Natural killer cell (primary cell): ENCODE measurements at regions of chr7 and their contacts with region 1.

Region 1: GRCh38 chr7:143240291-143241168 is 18.7 kb downstream of the TAS2R40 start:
- DNase-seq: peak; percentile 37 to 88
- ATAC-seq: peak; percentile 93 to 99 (median 97)
- H3K4me3 ChIP-seq: no peak overlapping the region
- H3K4me3 Mint-ChIP-seq: no peak overlapping the region
- H3K27ac ChIP-seq: no peak overlapping the region
- H3K27ac Mint-ChIP-seq: no peak overlapping the region
- H3K4me1 ChIP-seq: peaks cover 3% of the 10 kb centered on the region
- H3K4me1 Mint-ChIP-seq: peaks cover 0 to 3% of the 10 kb centered on the region in 2 donors
- H3K27me3 ChIP-seq: no peaks in the 10 kb centered on the region
- H3K27me3 Mint-ChIP-seq: peaks cover 16 to 36% of the 10 kb centered on the region in 2 donors
- CTCF ChIP-seq: peak; percentile 97

Region 2: GRCh38 chr7:142459551-142459963 is 781.0 kb before region 1 on chr7:
- intact Hi-C with region 1: no loop called
- DNase-seq: peak in 1 of 2 donors; percentile 73
- ATAC-seq: peak; percentile 53 to 75 (median 69)
- H3K4me3 ChIP-seq: no peak overlapping the region
- H3K4me3 Mint-ChIP-seq: no peak overlapping the region
- H3K27ac ChIP-seq: no peak overlapping the region
- H3K27ac Mint-ChIP-seq: no peak overlapping the region
- H3K4me1 ChIP-seq: peaks cover 9% of the 10 kb centered on the region
- H3K4me1 Mint-ChIP-seq: peaks cover 0 to 6% of the 10 kb centered on the region in 2 donors
- H3K27me3 ChIP-seq: no peaks in the 10 kb centered on the region
- H3K27me3 Mint-ChIP-seq: peaks cover 4 to 10% of the 10 kb centered on the region in 2 donors
- CTCF ChIP-seq: peak; percentile 73

Region 3: GRCh38 chr7:143305423-143306070 is 65.0 kb after region 1 on chr7:
- intact Hi-C with region 1: loop called (anchors 2 kb)
- DNase-seq: peak; percentile 39 to 78
- ATAC-seq: peak; percentile 58 to 69 (median 66)
- H3K4me3 ChIP-seq: no peak overlapping the region
- H3K4me3 Mint-ChIP-seq: no peak overlapping the region
- H3K27ac ChIP-seq: no peak overlapping the region
- H3K27ac Mint-ChIP-seq: peak overlapping the region in 1 of 2 donors; percentile 2
- H3K4me1 ChIP-seq: peaks cover 6% of the 10 kb centered on the region
- H3K4me1 Mint-ChIP-seq: peaks cover 16 to 26% of the 10 kb centered on the region in 2 donors
- H3K27me3 ChIP-seq: no peaks in the 10 kb centered on the region
- H3K27me3 Mint-ChIP-seq: no peaks in the 10 kb centered on the region
- CTCF ChIP-seq: peak; percentile 46

Region 4: DNA sequence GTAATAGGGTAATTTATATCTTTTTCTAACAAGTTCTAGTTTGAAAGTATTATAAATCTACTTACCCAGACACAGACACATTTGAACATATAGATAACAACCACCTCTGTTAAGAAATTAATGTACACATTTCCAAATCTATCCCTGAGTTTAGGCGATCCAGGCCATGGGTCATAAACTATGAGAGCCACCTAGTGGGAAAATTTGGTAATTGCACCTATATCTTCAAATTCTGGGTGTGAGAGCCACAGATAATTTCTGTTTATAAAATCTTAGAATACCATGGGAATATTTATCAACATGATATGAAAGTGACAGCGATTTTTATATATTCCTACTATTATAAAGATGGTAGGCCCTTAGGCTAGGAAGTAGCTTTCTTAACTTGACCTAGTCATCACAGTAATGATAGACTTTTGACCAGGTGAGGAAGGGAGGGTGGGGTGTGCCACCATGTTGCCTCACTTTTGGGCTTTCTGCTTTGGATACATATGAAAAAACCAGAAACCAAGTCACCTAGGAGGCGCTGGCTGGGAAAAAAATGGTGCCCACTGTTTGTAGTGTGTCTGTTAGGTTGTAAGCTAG is 176.1 kb after region 1 on chr7:
- intact Hi-C with region 1: loop called (anchors 1 kb)
- DNase-seq: peak in 1 of 2 donors; percentile 78
- ATAC-seq: peak; percentile 57 to 65 (median 65)
- H3K4me3 ChIP-seq: no peak overlapping the region
- H3K4me3 Mint-ChIP-seq: no peak overlapping the region
- H3K27ac ChIP-seq: no peak overlapping the region
- H3K27ac Mint-ChIP-seq: no peak overlapping the region
- H3K4me1 ChIP-seq: no peaks in the 10 kb centered on the region
- H3K4me1 Mint-ChIP-seq: peaks cover 0 to 6% of the 10 kb centered on the region in 2 donors
- H3K27me3 ChIP-seq: peaks cover 5% of the 10 kb centered on the region
- H3K27me3 Mint-ChIP-seq: peaks cover 38 to 41% of the 10 kb centered on the region in 2 donors
- CTCF ChIP-seq: peak; percentile 86